ENCODE measurements at regions of chr11 and their contacts with region 1.

Region 1: GRCh38 chr11:31641477-31642062 is 132.0 kb downstream of the ELP4 start:
- DNase-seq: peak; percentile 17 to 59
- H3K4me3 ChIP-seq: no peak overlapping the region
- H3K27ac ChIP-seq: no peak overlapping the region
- H3K4me1 ChIP-seq: no peaks in the 10 kb centered on the region
- H3K27me3 ChIP-seq: no peaks in the 10 kb centered on the region
- CTCF ChIP-seq: peak; percentile 54 to 72 (median 70)
- EP300 ChIP-seq: no peak
- POLR2A ChIP-seq: no peak
- RAD21 ChIP-seq: peak; percentile 79

Region 2: GRCh38 chr11:31655483-31655882 is 13.9 kb after region 1 on chr11:
- CTCF ChIA-PET with region 1: interaction called, 19 read pairs
- POLR2A ChIA-PET with region 1: no interaction called
- DNase-seq: no peak
- H3K4me3 ChIP-seq: no peak overlapping the region
- H3K27ac ChIP-seq: no peak overlapping the region
- H3K4me1 ChIP-seq: peaks cover 0 to 7% (median 1%) of the 10 kb centered on the region in 4 experiments; a peak in 2 of 7 replicates
- H3K27me3 ChIP-seq: peaks cover 0 to 1% (median 0%) of the 10 kb centered on the region in 4 experiments; a peak in 1 of 7 replicates
- CTCF ChIP-seq: no peak
- EP300 ChIP-seq: no peak
- POLR2A ChIP-seq: no peak
- RAD21 ChIP-seq: no peak

Region 3: GRCh38 chr11:31875866-31876560 is 234.4 kb after region 1 on chr11:
- CTCF ChIA-PET with region 1: interaction called, 10 read pairs
- POLR2A ChIA-PET with region 1: no interaction called
- DNase-seq: no peak
- H3K4me3 ChIP-seq: no peak overlapping the region
- H3K27ac ChIP-seq: no peak overlapping the region
- H3K4me1 ChIP-seq: peaks cover 6 to 18% (median 15%) of the 10 kb centered on the region in 4 experiments; a peak in 6 of 7 replicates
- H3K27me3 ChIP-seq: peaks cover 0 to 11% (median 2%) of the 10 kb centered on the region in 4 experiments; a peak in 3 of 7 replicates
- CTCF ChIP-seq: no peak
- EP300 ChIP-seq: no peak
- POLR2A ChIP-seq: no peak
- RAD21 ChIP-seq: no peak